Activated CD8-positive, alpha-beta memory T cell treated with anti-CD3 and anti-CD28 coated beads, Interleukin-2, amount 10 ng/mL, durations not matched to agents 7 days and 5 days (primary cell): ENCODE measurements at regions of chr12 and their contacts with region 1.

Region 1: DNA sequence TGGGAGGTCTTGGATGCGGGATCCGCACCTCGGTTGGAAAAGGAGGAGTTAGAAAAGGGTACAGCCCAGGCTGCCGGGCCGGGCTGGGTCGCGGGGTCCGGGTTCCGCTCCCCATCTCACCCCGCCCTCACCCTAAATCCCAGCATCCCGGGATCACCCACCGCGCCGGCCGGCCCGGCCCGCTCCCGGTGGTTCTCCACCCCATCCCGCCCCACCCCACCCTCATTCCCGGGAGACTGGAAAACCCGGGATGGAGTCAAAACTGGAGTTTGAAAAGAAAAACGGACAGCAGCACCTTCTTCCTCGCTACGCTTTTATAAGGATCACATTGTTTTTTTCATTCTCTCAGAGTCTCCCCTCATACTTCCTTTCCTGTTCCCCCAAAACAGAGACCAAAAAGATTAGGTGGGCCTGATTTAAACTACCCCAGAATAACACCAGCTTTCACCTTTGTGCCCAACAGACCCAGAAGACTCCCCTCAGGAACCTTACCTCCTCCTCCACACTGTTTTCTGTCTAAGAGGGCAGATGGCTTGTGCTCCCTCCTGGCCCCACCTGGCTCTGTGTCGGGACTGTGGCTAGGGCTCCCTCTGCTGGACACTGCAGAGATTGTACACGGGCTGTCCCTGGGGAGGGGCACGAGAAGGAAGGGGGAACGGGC is 2.8 kb downstream of the GLI1 start:
- DNase-seq: peak; percentile 94
- ATAC-seq: peak; percentile 80
- H3K4me3 Mint-ChIP-seq: peak overlapping the region; percentile 82
- H3K27ac Mint-ChIP-seq: peak overlapping the region; percentile 58
- H3K4me1 Mint-ChIP-seq: peaks cover 46% of the 10 kb centered on the region
- H3K27me3 Mint-ChIP-seq: peaks cover 18% of the 10 kb centered on the region

Region 2: DNA sequence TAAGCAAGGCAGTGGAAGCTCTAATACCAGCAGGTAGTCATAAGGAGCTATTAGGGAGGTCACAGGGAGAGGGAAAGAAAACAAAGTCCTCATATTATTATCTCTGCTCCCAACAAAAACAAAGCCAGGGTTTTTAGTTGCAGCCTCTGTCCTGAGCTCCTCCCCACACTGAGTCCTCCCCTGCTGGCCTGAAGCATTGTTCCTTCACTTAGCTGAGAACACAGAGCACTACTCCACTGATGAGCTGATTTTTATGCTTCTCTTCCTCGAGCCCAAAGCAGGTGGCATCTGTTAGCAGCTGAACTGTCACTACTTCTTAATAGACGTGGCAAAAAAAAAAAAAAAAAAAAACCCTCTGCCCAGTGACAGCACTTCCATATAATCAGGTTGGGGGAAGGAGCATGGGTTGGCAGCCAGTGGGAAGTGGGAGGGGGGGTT is 200.9 kb before region 1 on chr12:
- CTCF ChIA-PET with region 1: interaction called, 87 read pairs
- DNase-seq: no peak
- ATAC-seq: no peak
- H3K4me3 Mint-ChIP-seq: no peak overlapping the region
- H3K27ac Mint-ChIP-seq: no peak overlapping the region
- H3K4me1 Mint-ChIP-seq: peaks cover 8% of the 10 kb centered on the region
- H3K27me3 Mint-ChIP-seq: no peaks in the 10 kb centered on the region

Region 3: GRCh38 chr12:57389033-57389432 is 73.3 kb before region 1 on chr12:
- CTCF ChIA-PET with region 1: no interaction called
- DNase-seq: no peak
- ATAC-seq: no peak
- H3K4me3 Mint-ChIP-seq: no peak overlapping the region
- H3K27ac Mint-ChIP-seq: no peak overlapping the region
- H3K4me1 Mint-ChIP-seq: peaks cover 2% of the 10 kb centered on the region
- H3K27me3 Mint-ChIP-seq: no peaks in the 10 kb centered on the region

Region 4: DNA sequence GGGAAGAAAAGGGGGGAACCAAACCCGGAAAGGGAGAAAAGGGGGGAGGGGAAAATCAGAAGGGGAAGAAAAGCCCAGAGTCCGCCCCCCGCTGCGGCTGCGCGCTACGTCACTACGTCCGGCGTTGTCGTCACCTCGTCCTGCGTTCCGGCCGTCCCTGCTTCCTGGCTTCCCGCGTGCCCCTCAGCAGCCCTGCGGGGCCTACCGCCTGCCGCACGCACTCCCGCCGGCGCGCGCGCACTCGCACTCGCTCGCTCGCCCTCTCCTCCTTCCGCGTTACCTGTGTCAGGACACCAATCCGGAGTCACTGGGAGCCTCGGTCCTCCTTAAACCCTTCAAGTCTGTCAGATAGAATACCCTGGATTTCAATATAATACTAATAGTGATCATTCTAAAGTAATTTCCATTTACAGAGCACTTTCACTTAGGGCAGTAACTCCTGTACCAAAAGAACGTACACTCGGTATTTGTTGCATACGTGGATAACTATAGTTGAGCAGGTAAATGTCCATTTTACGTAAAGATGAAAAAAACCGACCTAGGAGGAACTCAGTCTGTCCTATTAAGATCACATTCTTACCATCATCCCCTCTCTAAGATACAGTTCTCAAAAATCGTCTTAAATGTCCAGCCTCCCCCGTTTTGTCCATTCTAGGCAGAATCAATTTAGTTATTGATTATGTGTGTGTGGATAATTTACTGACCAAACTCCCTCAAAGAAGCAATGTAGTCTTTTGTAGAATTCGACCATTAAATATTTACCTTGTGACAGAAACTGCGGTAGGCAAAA is 31.3 kb before region 1 on chr12 and contains the start of gene R3HDM2:
- CTCF ChIA-PET with region 1: interaction called, 40 read pairs
- DNase-seq: peak; percentile 97
- ATAC-seq: peak; percentile 94
- H3K4me3 Mint-ChIP-seq: peak within 1 kb of the TSS; percentile 89
- H3K27ac Mint-ChIP-seq: peak within 1 kb of the TSS; percentile 98
- H3K4me1 Mint-ChIP-seq: peaks cover 43% of the 10 kb centered on the region
- H3K27me3 Mint-ChIP-seq: no peaks in the 10 kb centered on the region
- total RNA-seq, gene R3HDM2: 53.8 to 82.4 TPM

Region 5: DNA sequence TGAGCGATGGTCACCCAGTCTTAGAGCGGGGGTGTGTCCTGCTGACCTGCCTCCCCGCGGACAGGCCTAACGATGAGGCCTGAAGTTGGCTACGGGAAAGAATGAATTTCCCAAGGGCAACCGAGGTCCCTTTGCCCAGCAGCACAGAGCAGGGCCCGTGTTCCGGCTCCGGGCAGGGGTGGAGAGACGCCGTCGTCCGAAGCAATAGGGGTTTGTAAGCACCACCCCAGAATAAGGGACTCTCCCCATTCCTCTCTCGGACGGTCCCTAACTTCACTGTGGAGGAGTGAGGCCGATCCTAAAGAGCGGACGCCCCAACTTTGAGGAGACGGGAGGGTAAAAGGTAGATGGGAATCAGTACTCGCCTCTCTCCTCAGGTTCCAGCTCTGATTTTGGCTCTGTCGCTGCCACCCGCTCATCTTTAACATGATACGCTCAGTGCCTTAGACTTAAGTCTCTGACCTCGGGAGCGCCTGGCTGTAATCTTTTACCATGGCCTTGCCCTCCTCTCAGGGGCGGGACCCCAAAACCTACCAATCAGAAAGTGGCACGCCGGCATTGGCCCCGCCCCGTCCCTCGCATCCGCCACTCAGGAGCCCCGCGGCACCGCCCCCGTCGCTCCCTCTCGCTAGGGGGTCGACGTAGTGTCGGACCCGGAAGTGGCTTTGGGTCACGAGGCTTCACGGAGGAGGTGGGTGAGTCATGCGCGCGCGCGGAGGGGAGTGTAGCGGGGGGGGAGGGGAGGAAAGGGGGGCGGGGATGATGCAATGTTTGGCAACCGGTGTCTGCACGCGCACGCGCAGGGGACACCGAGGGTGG is 57.9 kb after region 1 on chr12 and contains the start of gene DDIT3:
- CTCF ChIA-PET with region 1: interaction called, 10 read pairs
- DNase-seq: peak; percentile 100
- ATAC-seq: peak; percentile 73
- H3K4me3 Mint-ChIP-seq: peak within 1 kb of the TSS; percentile 93
- H3K27ac Mint-ChIP-seq: peak within 1 kb of the TSS; percentile 100
- H3K4me1 Mint-ChIP-seq: peaks cover 55% of the 10 kb centered on the region
- H3K27me3 Mint-ChIP-seq: no peaks in the 10 kb centered on the region
- total RNA-seq, gene DDIT3: 15.3 to 15.9 TPM

Region 6: DNA sequence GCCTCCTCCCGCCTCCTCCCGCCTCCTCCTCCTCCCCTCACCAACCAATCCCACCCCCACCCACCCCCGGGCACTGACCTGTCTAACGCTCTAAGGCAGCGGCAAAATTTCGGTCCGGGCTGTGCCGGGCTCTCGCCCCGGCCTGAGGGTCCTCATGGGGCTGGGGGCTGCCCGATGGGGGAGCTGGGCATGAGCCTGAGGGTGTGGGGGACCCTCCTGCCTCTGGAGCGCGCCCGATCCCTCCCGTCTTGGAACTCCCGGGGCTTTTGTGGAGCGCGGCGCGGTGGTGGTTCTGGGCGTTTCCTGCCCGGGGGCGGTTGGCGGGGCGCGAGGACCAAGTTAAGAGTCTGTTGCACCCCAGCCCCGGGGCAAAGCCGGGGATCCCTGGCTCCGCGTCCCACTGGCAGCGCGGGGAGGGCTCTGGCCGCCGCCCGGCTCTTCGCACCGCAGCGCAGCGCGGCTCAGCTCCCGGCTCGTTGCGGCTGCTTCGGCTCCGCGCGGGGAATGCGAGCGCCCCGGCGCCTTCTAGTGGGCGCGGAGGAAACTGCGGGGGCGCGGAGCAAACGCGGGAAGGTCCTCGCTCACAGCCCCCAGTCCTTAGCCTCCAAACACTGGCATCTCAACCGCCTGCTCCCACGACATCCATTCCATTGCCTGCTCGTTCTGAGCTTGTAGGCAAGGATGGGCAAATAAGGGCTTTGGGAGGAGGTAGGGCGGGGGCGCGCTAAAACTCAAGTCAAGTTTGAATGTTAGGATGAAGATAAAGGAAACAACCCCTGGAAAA is 170.5 kb after region 1 on chr12 and contains the start of gene B4GALNT1:
- CTCF ChIA-PET with region 1: interaction called, 10 read pairs
- DNase-seq: peak; percentile 70
- ATAC-seq: peak; percentile 90
- H3K4me3 Mint-ChIP-seq: peak within 1 kb of the TSS; percentile 53
- H3K27ac Mint-ChIP-seq: no peak within 1 kb of the TSS
- H3K4me1 Mint-ChIP-seq: peaks cover 9% of the 10 kb centered on the region
- H3K27me3 Mint-ChIP-seq: peaks cover 63% of the 10 kb centered on the region
- total RNA-seq, gene B4GALNT1: 2.4 to 8.2 TPM